MCF 10A (cell line): ENCODE measurements at regions of chr17 and their contacts with region 1.

Region 1: GRCh38 chr17:50783193-50783660 is 15.9 kb upstream of the ANKRD40CL start:
- DNase-seq: peak; percentile 84
- H3K4me3 Mint-ChIP-seq: no peak overlapping the region
- H3K27ac Mint-ChIP-seq: no peak overlapping the region
- H3K4me1 Mint-ChIP-seq: peaks cover 28% of the 10 kb centered on the region
- H3K27me3 Mint-ChIP-seq: no peaks in the 10 kb centered on the region
- CTCF ChIP-seq: peak; percentile 94

Region 2: GRCh38 chr17:50707289-50708049 is 75.8 kb before region 1 on chr17 and contains the start of gene ANKRD40:
- CTCF ChIA-PET with region 1: no interaction called
- POLR2A ChIA-PET with region 1: no interaction called
- intact Hi-C with region 1: no loop called
- DNase-seq: peak; percentile 94
- H3K4me3 Mint-ChIP-seq: peak within 1 kb of the TSS; percentile 95
- H3K27ac Mint-ChIP-seq: peak within 1 kb of the TSS; percentile 76
- H3K4me1 Mint-ChIP-seq: peaks cover 25% of the 10 kb centered on the region
- H3K27me3 Mint-ChIP-seq: no peaks in the 10 kb centered on the region
- CTCF ChIP-seq: no peak
- total RNA-seq, gene ANKRD40: 42.2 and 46.4 TPM in 2 replicates

Region 3: GRCh38 chr17:50798424-50799288 is 15.4 kb after region 1 on chr17:
- CTCF ChIA-PET with region 1: interaction called, 33 read pairs
- POLR2A ChIA-PET with region 1: interaction called, 29 read pairs
- intact Hi-C with region 1: no loop called
- DNase-seq: peak; percentile 86
- H3K4me3 Mint-ChIP-seq: no peak overlapping the region
- H3K27ac Mint-ChIP-seq: peak overlapping the region; percentile 82
- H3K4me1 Mint-ChIP-seq: peaks cover 11% of the 10 kb centered on the region
- H3K27me3 Mint-ChIP-seq: no peaks in the 10 kb centered on the region
- CTCF ChIP-seq: no peak

Region 4: DNA sequence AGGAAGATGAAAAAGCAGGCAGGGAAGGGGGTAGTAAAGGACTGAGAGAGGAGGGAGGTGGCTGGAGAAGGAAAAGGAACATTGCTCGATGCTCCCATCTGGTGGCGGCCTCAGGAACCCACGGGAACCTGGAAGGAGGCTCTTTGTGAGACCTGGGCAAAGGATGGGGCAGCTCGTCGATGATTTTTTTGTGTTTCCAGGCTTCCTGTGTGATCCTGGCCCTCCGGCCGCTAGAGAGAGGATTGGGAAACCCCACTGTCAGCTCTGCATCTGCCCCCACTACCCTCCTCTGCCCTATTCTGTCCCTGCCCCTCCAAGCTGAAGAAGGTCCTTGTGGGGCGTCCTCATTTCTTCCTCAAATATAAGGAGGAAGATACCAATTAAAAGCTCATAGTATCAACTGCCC is 58.7 kb after region 1 on chr17:
- CTCF ChIA-PET with region 1: interaction called, 320 read pairs
- POLR2A ChIA-PET with region 1: interaction called, 23 read pairs
- intact Hi-C with region 1: loop called (anchors 1 kb)
- DNase-seq: peak; percentile 74
- H3K4me3 Mint-ChIP-seq: no peak overlapping the region
- H3K27ac Mint-ChIP-seq: no peak overlapping the region
- H3K4me1 Mint-ChIP-seq: peaks cover 14% of the 10 kb centered on the region
- H3K27me3 Mint-ChIP-seq: no peaks in the 10 kb centered on the region
- CTCF ChIP-seq: peak; percentile 84

Region 5: DNA sequence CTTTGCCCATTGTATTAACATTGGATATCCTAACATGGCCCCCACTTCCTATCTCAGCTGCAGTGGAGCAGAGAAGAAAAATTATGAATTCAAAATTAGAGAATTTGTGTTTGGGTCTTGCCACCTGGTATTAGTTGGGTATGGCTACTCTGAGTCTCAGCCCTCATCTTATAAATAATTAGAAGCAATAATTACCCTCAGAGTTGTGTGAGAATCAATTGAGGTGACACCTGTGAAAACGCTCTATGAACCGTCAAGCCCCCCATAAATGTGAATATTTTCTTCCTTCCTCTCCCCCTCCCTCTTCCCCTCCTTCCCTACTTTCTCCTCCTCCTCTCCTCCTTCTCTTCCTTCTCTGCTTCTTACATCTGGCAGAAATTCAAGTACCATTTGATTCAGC is 91.8 kb after region 1 on chr17:
- CTCF ChIA-PET with region 1: no interaction called
- POLR2A ChIA-PET with region 1: no interaction called
- intact Hi-C with region 1: no loop called
- DNase-seq: no peak
- H3K4me3 Mint-ChIP-seq: no peak overlapping the region
- H3K27ac Mint-ChIP-seq: no peak overlapping the region
- H3K4me1 Mint-ChIP-seq: peaks cover 5% of the 10 kb centered on the region
- H3K27me3 Mint-ChIP-seq: no peaks in the 10 kb centered on the region
- CTCF ChIP-seq: no peak

Region 6: DNA sequence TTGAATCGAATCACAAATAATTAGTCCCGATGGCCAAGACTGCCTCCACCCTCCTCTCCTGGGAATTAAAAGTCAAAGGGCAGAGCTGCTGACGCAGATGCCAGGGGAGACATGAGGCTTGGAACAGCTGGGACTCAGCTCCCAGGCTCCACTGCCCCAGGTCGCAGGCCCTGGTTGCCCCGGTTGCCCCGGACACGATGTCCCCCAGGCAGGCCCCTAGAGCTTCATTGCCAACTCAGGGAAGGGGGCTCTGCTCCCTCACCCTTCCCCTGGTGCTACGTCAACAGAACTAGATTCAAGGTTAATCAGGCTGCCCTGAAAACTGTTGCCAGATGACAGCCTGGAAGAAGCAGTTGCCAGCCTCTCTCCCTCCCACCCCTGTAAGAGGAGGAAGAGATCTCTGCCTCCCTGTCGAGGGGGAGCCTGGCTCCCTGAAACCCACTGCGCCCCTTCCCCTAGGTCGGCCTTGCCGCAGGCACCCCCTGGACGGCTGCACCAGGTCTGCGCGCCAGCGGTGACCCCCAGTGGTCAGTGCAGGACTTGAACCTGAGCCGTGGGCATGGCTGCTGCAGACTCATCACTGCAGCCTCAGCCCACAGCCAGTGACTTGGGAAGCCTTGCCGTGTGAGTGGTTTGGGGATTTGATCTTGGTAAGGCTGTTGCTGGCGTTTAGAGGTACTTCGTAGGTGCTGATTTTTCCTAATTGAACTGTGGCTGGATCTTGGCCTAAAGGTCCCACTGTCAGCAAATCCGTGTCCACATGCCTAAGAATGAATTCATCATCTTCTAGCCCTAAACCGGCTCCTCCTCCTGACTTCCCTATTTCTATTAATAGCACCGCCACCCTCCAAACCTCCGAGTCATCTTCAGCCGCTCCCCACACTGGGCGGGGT is 167.0 kb after region 1 on chr17:
- CTCF ChIA-PET with region 1: interaction called, 27 read pairs
- POLR2A ChIA-PET with region 1: interaction called, 5 read pairs
- intact Hi-C with region 1: loop called (anchors 1 kb)
- DNase-seq: peak; percentile 92
- H3K4me3 Mint-ChIP-seq: peak overlapping the region; percentile 42
- H3K27ac Mint-ChIP-seq: peak overlapping the region; percentile 67
- H3K4me1 Mint-ChIP-seq: peaks cover 49% of the 10 kb centered on the region
- H3K27me3 Mint-ChIP-seq: no peaks in the 10 kb centered on the region
- CTCF ChIP-seq: peak; percentile 89